ENCODE measurements at regions of chr20 and their contacts with region 1.

Region 1: DNA sequence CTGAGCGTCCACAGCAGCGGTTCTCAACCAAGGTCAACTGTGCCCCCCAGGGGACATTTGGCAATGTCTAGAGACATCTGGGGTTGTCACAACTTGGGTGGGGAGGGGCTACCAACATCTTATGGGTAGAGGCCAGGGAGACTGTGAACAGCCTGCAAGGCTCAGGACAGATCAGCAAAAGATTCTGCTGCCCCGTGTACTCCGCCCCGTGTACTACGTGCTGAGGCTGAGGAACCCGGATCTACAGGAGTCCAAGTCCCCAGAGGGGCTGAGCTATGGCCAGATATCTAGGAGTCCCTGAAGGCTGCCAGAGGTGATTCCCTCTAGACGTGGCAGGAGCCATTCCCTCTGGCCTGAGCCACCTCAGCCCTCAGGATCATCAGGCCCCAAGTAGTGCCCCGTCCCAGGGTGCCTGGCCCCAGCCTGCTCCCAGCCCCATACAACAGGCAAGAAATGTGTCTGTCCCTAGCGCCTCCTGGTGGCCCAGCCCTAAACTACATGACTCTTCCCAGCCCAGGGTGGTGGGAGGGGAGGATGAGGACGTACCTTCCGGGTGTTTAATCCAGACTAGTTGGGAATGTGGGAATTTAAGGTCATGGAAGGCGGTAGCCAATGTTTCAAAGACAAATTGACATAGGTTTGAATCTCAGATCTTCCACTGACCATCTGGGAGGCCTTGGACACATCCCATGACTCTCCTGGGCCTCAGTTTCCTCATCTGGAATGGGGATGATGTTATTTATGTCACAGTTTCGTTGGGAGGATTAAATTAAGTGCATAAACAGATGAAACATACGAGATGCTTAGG is 49.5 kb upstream of the PTPN1 start:
- DNase-seq: peak; percentile 74
- ATAC-seq: peak; percentile 91
- H3K4me3 ChIP-seq: no peak overlapping the region
- H3K27ac ChIP-seq: no peak overlapping the region
- H3K4me1 ChIP-seq: peaks cover 8% of the 10 kb centered on the region
- H3K27me3 ChIP-seq: no peaks in the 10 kb centered on the region
- CTCF ChIP-seq: peak; percentile 94

Region 2: GRCh38 chr20:50189681-50190582 is 270.7 kb before region 1 on chr20:
- CTCF ChIA-PET with region 1: interaction called, 9 read pairs
- POLR2A ChIA-PET with region 1: no interaction called
- in situ Hi-C with region 1: no loop called
- intact Hi-C with region 1: loop called (anchors 1 kb)
- DNase-seq: no peak
- ATAC-seq: peak; percentile 72
- H3K4me3 ChIP-seq: peak overlapping the region; percentile 62 to 97
- H3K27ac ChIP-seq: peak overlapping the region; percentile 48; the same call in 1 of the 2 replicates
- H3K4me1 ChIP-seq: peaks cover 37% of the 10 kb centered on the region
- H3K27me3 ChIP-seq: no peaks in the 10 kb centered on the region
- CTCF ChIP-seq: peak; percentile 83

Region 3: GRCh38 chr20:50292324-50293243 is 168.1 kb before region 1 on chr20:
- CTCF ChIA-PET with region 1: no interaction called
- POLR2A ChIA-PET with region 1: no interaction called
- in situ Hi-C with region 1: no loop called
- intact Hi-C with region 1: loop called (anchors 10 kb)
- DNase-seq: no peak
- ATAC-seq: peak; percentile 62
- H3K4me3 ChIP-seq: no peak overlapping the region
- H3K27ac ChIP-seq: peak overlapping the region; percentile 75
- H3K4me1 ChIP-seq: peaks cover 16% of the 10 kb centered on the region
- H3K27me3 ChIP-seq: no peaks in the 10 kb centered on the region
- CTCF ChIP-seq: no peak

Measured in Panc1 (cell line).